Calu3 (cell line): ENCODE measurements at regions of chr3 and their contacts with region 1.

Region 1: DNA sequence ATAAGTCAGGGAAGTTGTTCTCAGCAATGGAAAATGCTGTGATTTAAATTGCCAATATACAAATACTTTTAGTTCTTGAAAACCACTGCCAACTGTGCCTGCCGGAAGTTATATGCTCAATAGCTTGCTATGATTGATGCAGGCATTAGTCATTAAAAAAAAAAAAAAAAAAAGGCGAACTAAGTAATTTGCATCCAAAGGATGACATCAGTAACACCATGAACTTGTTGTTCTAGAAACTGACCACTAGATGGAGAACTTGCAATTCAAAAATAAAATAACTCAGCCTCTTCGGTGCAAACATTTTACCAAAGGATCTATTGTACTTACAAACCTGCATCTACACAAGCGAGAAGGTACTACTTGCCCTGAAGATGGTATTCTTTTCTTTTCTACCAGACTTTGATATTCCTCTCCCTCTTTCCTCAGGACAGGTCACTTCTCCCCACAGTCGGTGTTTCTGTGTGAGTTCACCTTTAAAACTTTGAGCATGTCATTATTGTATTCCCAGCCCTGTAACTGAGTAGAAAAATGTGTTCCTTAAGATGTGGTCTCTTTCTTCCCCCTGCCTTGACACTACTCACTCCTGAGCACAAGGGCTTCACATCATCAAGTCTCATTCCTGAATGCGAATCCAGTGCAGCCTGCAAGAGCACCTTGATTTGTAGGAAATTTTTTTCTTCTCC is 115.0 kb upstream of the VEPH1 start:
- DNase-seq: peak; percentile 29
- H3K4me3 Mint-ChIP-seq: no peak overlapping the region
- H3K27ac Mint-ChIP-seq: no peak overlapping the region
- H3K4me1 Mint-ChIP-seq: peaks cover 9% of the 10 kb centered on the region
- H3K27me3 Mint-ChIP-seq: peaks cover 13% of the 10 kb centered on the region
- CTCF ChIP-seq: peak; percentile 80

Region 2: GRCh38 chr3:157487339-157487738 is 130.9 kb before region 1 on chr3:
- CTCF ChIA-PET with region 1: no interaction called
- intact Hi-C with region 1: no loop called
- DNase-seq: no peak
- H3K4me3 Mint-ChIP-seq: no peak overlapping the region
- H3K27ac Mint-ChIP-seq: no peak overlapping the region
- H3K4me1 Mint-ChIP-seq: peaks cover 6% of the 10 kb centered on the region
- H3K27me3 Mint-ChIP-seq: no peaks in the 10 kb centered on the region
- CTCF ChIP-seq: no peak

Region 3: DNA sequence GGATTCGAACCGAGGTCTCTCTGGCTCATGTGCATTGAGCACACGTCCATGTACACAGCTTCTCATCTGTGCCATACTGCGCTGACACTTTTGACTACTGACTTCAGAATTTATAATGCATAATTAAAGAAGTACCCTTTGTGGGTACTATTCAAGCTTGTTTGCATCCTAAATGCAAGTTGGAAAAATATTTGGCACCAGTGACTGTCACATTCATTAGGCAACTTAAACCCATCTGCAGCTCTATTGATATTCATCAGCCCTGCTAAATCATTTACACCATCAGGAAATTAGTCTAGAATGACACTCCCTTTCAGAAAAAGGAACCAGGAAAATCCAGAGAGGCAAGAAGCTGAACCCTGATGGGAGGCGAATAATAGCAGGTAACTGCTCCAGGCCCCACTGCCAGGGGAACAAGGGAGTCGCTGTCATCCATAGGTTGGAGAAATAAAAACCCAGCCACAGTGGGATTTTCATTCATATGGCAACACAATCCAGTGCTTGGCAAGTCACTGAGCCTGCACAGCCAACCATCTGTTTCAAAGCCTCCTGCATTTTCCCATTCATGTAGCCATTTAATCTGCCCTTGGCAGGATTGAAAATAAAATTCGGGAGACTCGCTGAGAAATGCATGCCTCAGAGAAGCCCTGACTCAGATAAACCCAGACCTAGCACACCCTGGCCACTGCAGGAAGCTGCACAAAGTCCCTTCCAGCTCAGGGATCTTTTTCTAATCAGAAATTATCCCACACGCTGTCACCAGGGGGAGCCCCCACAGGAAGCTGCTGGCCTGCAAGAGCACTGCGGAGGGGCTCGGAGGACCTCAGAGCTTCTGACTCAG is 12.0 kb before region 1 on chr3:
- CTCF ChIA-PET with region 1: interaction called, 11 read pairs
- intact Hi-C with region 1: no loop called
- DNase-seq: peak; percentile 95
- H3K4me3 Mint-ChIP-seq: peak overlapping the region; percentile 26
- H3K27ac Mint-ChIP-seq: no peak overlapping the region
- H3K4me1 Mint-ChIP-seq: peaks cover 11% of the 10 kb centered on the region
- H3K27me3 Mint-ChIP-seq: no peaks in the 10 kb centered on the region
- CTCF ChIP-seq: peak; percentile 97

Region 4: DNA sequence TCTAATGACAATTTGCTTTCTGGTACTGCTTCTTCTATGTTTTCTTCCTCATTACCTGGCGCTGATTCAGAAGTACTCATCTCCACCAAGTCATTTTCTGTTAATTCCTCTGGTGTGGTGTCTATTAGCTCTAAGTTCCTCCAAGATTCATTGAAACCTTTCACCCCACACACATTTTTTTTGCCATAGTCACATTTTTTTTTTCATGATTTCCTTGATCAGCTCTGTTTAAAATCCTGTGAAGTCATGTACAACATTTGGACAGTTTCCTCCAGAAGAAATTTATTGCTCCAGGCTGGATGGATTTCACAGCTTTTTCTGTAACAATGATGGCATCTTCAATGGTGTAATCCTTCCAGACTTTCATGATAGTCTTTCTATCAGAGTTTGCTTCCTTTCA is 128.2 kb after region 1 on chr3:
- CTCF ChIA-PET with region 1: no interaction called
- intact Hi-C with region 1: no loop called
- DNase-seq: no peak
- H3K4me3 Mint-ChIP-seq: no peak overlapping the region
- H3K27ac Mint-ChIP-seq: no peak overlapping the region
- H3K4me1 Mint-ChIP-seq: no peaks in the 10 kb centered on the region
- H3K27me3 Mint-ChIP-seq: no peaks in the 10 kb centered on the region
- CTCF ChIP-seq: no peak

Region 5: DNA sequence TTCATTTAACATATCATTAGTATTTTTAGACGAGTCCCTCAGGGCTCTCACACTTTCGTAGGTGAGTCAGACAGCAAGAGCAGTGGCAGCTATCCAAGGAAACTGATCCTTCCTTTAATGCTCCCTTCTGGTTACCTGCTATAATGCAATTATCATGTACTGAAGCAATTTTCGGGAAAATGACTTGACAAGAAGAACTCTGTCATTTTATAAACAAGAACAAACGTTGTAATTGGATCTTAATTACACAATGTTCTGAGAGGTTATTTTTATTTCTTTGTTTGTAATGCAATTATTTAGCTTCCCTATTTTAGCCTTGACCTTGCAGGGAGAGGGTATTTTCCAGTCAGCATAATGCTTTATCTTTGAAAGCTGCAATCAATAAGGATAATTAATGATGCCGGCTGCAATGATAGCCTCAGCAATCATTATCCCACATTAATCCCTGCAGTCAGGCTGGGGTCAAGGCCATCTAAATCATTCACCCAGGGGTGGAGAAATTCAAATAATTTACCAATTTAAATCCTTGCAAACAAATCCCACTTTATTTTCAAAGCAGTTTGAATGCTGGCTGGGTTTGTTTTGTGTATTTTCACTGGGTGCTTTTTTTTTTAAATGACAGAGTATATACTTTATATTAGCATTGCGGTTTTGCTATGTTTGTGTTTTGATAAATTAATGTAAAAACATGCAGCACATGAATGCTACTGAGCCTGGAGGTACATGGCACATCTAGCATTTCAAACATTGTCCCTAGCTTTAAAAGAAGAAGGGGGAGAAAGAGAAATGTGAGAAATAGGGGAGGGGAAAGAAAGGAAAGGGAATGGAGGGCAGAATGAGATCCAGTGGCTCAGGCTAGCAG is 238.1 kb after region 1 on chr3:
- CTCF ChIA-PET with region 1: no interaction called
- intact Hi-C with region 1: loop called (anchors 5 kb)
- DNase-seq: no peak
- H3K4me3 Mint-ChIP-seq: no peak overlapping the region
- H3K27ac Mint-ChIP-seq: no peak overlapping the region
- H3K4me1 Mint-ChIP-seq: no peaks in the 10 kb centered on the region
- H3K27me3 Mint-ChIP-seq: peaks cover 7% of the 10 kb centered on the region
- CTCF ChIP-seq: no peak

Region 6: DNA sequence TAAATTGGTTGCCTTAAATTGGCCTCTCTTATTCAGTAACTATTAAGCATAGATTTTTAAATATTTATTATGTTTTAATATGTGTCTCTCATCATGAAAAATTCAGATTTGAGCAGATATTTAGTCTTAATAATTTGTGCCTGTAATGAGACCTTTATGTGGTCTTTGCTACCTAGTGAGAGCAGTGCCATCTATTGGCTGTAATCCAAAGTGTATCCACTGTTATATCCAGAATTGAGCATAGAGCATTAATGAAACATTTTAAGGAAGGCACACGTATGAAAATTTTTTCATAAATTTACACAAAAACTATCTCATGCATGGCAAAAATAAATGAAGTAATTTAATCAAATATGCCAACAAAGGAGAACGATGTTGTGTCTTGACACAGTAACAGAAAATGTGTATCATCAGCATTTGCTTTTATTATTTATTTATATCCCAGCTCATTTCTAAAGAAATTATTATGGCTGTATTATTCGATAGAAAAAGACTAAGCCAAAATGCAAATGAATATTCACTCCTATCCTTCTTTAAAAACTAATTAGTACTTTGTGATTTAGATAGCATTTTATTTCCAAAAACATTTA is 695.2 kb after region 1 on chr3:
- CTCF ChIA-PET with region 1: no interaction called
- intact Hi-C with region 1: loop called (anchors 1 kb)
- DNase-seq: peak; percentile 29
- H3K4me3 Mint-ChIP-seq: no peak overlapping the region
- H3K27ac Mint-ChIP-seq: no peak overlapping the region
- H3K4me1 Mint-ChIP-seq: no peaks in the 10 kb centered on the region
- H3K27me3 Mint-ChIP-seq: no peaks in the 10 kb centered on the region
- CTCF ChIP-seq: peak; percentile 42

Region 7: GRCh38 chr3:158644345-158644908 is 1026.2 kb after region 1 on chr3 and contains the start of gene GFM1:
- CTCF ChIA-PET with region 1: no interaction called
- intact Hi-C with region 1: loop called (anchors 5 kb)
- DNase-seq: peak; percentile 95
- H3K4me3 Mint-ChIP-seq: peak within 1 kb of the TSS; percentile 74
- H3K27ac Mint-ChIP-seq: peak within 1 kb of the TSS; percentile 42
- H3K4me1 Mint-ChIP-seq: peaks cover 11% of the 10 kb centered on the region
- H3K27me3 Mint-ChIP-seq: no peaks in the 10 kb centered on the region
- CTCF ChIP-seq: peak; percentile 90
- total RNA-seq, gene GFM1: 77.3 and 77.9 TPM in 2 replicates